Panc1 (cell line): ENCODE measurements at regions of chr2 and their contacts with region 1.

Region 1: DNA sequence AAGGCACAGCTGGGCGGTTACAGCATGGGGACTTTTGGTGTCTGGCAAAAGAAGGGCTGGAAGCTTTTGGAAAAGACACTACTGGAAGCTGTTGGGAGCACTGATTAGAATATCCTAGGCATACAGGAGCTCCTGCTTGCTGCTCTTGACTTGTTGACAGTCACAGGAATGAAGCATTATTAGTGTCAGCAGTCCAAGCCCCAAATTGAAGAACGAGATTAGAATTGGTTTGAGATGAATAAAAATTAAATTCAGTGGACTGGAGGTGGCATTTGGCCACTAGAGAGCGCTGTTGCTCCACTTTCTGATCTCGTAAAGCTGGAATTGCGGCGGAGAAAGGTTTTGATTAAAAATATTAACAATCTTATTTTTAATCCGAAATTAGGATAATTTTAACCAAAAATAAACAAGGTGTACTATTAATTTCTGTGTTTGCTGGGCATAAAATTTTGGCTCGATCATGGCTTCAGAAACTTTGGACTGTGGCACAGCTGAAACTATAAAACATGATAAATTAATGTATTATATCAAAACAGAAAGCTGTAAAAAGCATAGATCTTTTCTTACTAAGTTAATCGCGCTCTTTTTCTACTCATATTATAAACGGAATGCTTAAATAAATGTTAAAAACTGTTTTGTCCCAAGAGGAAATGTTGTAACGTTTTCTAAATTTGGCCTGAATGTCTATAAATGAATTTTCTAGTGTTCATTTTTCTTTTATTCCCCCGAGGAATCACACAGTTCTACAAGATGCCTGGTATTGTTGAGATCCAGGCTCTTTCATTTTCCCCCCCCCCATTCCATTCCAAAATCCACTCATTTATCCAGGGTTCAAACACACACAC is 2.4 kb upstream of the HOXD8 start:
- DNase-seq: no peak
- ATAC-seq: peak; percentile 72; the same call in 1 of the 2 replicates
- H3K4me3 ChIP-seq: peak overlapping the region in 1 of 2 experiments; percentile 25; a peak in 1 of 4 replicates
- H3K27ac ChIP-seq: no peak overlapping the region
- H3K4me1 ChIP-seq: peaks cover 7% of the 10 kb centered on the region
- H3K27me3 ChIP-seq: no peaks in the 10 kb centered on the region
- CTCF ChIP-seq: peak; percentile 87

Region 2: DNA sequence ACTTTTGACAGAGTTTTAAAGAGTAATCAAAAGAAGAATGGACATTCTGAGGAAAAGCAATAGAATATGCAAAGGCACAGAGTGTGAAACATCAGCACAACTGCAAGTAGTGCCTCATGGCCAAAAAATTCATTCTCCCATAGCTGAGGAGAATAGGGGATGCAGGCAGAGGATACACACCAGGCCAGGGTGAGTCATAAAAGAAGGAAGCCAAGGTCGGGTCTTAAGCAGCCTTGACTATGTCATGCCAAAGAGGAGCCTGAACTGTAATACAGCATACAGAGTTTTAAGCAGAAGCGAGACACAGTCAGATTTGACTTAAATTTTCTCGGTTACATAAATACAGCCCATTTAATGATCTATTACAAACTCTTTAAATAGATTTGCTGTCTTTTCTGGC is 290.1 kb before region 1 on chr2:
- CTCF ChIA-PET with region 1: no interaction called
- POLR2A ChIA-PET with region 1: no interaction called
- in situ Hi-C with region 1: no loop called
- intact Hi-C with region 1: no loop called
- DNase-seq: no peak
- ATAC-seq: no peak
- H3K4me3 ChIP-seq: no peak overlapping the region
- H3K27ac ChIP-seq: no peak overlapping the region
- H3K4me1 ChIP-seq: no peaks in the 10 kb centered on the region
- H3K27me3 ChIP-seq: no peaks in the 10 kb centered on the region
- CTCF ChIP-seq: no peak

Region 3: DNA sequence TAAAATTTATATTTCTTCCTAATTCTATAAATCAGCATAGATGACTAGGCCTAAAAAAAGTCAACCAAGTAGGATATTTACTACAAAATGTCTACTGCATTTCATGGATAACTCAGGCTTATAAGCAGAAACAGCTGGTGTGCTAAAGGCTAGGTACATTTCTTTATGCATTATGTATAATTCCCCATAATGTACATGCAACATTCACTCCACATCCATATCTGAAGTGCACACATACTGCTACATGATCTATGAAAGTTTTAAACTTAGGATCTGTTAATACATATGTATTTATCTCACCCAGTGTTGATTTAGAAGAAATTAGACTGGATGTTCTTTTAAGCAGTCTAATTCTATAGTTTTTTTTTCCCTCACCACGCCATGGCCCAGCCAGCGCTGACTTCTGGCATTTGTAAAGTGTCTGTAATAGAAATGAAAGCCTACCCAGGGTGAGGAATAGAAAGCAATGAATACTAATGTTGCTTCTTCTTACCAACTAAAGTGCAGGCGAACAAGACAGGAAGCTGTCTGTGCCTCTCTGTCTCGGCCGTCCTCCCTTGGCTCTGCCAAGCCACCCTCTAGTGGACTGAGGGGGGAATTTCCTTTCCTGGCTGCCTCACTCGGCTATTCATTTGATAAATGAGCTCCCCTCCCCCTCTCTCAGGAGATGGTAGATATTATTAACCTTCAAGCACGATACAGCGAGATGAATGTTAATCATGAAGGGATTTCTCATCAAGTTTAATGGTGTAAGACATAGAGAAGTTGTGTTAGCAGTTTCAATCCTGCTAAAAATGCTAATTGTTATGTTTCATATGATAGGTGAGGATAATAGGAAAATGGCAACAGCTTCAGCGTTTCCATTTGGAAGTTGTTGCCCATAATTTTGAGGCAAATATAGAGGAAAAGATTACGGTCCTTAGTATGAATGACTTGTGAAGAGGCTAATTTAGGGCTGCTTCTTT is 526.6 kb after region 1 on chr2:
- CTCF ChIA-PET with region 1: interaction called, 11 read pairs
- POLR2A ChIA-PET with region 1: no interaction called
- in situ Hi-C with region 1: no loop called
- intact Hi-C with region 1: loop called (anchors 5 kb)
- DNase-seq: no peak
- ATAC-seq: peak; percentile 92
- H3K4me3 ChIP-seq: no peak overlapping the region
- H3K27ac ChIP-seq: no peak overlapping the region
- H3K4me1 ChIP-seq: no peaks in the 10 kb centered on the region
- H3K27me3 ChIP-seq: no peaks in the 10 kb centered on the region
- CTCF ChIP-seq: peak; percentile 86